ENCODE measurements at regions of chr5 and their contacts with region 1.

Region 1: DNA sequence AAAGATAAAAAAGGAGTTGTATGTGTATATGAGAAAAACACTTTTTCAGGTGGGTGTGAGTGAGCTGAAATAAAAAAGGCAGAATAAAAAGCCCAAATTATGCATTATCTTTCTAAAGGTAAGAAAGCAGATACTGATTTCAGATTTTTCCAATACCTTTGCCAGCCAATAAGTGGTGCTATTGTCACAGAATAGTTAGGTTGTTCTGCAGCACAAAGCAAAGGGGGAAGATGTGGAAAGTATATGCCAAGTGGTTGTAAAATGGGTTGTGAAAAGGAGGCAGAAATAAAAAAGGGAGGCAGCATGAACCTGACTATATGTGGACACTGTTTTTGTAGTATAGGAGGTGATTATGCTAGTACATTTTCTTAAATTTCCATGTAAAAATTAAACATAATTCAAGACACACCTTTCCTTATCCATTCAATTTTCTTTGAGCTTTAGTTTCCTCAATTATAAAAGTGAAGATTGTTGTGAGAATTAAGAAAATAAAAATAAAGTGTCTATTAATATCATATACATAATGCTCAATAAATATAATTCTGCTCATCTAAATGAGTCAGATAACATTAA is 106.7 kb downstream of the SMIM15 start:
- DNase-seq: peak; percentile 23
- H3K4me3 Mint-ChIP-seq: no peak overlapping the region
- H3K27ac Mint-ChIP-seq: no peak overlapping the region
- H3K4me1 Mint-ChIP-seq: peaks cover 26% of the 10 kb centered on the region
- H3K27me3 Mint-ChIP-seq: no peaks in the 10 kb centered on the region
- CTCF ChIP-seq: peak; percentile 57

Region 2: DNA sequence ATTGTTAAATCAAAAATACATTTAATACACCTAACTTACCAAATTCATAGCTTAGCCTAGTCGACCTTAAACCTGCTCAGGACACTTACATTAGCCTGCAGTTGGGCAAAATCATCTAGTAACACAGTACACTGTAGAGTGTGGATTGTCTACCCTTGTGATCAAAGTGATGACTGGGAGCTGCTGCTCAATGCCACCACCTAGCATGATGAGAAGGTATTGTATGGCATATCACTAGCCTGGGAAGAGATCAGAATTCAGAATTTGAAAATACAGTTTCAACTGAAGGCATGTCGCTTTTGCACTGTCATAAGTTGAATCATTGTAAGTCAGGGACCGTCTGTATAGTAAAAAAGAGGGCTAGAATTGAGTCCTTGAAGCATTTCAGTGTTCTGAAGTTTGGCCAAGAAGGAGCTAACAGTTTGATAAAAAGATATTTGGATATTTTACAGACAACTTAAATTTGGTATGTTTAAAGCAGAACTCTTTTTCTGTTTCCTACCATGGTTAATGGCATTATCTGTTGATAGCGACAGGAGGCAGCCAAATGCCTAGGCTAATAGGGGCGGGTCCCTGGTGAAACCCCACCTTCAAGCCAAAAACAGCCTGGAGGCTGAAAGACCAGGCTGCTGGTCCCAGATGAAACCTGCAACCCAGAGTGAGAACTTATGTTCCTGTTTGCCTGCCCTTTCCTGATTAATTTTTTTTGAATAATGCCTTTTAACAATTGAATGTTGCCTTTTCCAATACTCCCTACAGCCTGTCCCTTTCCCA is 83.8 kb after region 1 on chr5:
- CTCF ChIA-PET with region 1: no interaction called
- intact Hi-C with region 1: loop called (anchors 5 kb)
- DNase-seq: no peak
- H3K4me3 Mint-ChIP-seq: no peak overlapping the region
- H3K27ac Mint-ChIP-seq: no peak overlapping the region
- H3K4me1 Mint-ChIP-seq: peaks cover 14% of the 10 kb centered on the region
- H3K27me3 Mint-ChIP-seq: no peaks in the 10 kb centered on the region
- CTCF ChIP-seq: no peak

Region 3: GRCh38 chr5:61256474-61256873 is 201.0 kb after region 1 on chr5:
- CTCF ChIA-PET with region 1: no interaction called
- intact Hi-C with region 1: loop called (anchors 10 kb)
- DNase-seq: peak; percentile 42
- H3K4me3 Mint-ChIP-seq: no peak overlapping the region
- H3K27ac Mint-ChIP-seq: peak overlapping the region; percentile 55
- H3K4me1 Mint-ChIP-seq: peaks cover 53% of the 10 kb centered on the region
- H3K27me3 Mint-ChIP-seq: no peaks in the 10 kb centered on the region
- CTCF ChIP-seq: no peak

Region 4: GRCh38 chr5:61408476-61409168 is 353.1 kb after region 1 on chr5:
- CTCF ChIA-PET with region 1: no interaction called
- intact Hi-C with region 1: loop called (anchors 10 kb)
- DNase-seq: peak; percentile 99
- H3K4me3 Mint-ChIP-seq: peak overlapping the region; percentile 64
- H3K27ac Mint-ChIP-seq: peak overlapping the region; percentile 65
- H3K4me1 Mint-ChIP-seq: peaks cover 23% of the 10 kb centered on the region
- H3K27me3 Mint-ChIP-seq: no peaks in the 10 kb centered on the region
- CTCF ChIP-seq: no peak

Region 5: DNA sequence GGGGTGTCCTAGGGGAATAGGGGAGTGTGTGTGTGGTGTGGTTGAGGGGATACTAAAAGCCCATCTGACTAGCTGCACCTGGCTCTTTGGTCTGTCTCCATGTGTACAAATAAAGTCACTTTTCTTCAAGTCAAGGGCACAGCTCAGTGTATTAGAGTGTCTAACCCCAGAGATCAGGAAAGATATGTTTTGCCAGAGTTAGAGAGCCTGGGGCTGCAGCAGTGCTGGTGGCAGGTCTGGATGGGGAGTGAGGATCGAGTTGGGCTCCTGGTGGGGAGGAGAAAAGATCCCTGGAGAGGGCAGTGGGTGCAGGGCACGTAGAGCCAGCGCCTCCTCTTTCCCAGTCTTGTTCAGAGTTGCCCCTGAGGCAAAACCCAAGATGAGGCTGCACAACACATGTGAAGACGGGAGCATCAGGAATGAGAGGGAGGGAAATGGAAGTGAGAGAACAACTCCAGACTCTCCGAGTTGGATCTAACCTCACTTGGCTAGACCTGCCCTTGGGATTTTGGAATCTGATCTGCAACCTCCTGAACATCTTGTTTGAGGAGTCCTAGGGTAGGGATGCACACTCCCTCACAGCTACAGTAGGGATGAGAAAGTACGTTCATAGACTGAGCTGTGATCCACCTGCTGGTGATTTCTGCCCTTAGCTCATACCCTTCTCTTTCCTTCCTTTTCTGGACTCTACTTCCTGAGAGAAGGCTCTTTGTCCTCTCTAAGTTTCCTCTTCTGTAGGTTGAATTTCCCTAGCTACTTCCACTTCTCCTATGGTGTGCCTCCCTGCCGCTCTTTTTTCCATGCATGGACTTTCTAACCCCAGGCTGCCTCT is 586.4 kb after region 1 on chr5:
- CTCF ChIA-PET with region 1: interaction called, 3 read pairs
- intact Hi-C with region 1: loop called (anchors 5 kb)
- DNase-seq: no peak
- H3K4me3 Mint-ChIP-seq: no peak overlapping the region
- H3K27ac Mint-ChIP-seq: no peak overlapping the region
- H3K4me1 Mint-ChIP-seq: no peaks in the 10 kb centered on the region
- H3K27me3 Mint-ChIP-seq: peaks cover 3% of the 10 kb centered on the region
- CTCF ChIP-seq: peak; percentile 14

Region 6: DNA sequence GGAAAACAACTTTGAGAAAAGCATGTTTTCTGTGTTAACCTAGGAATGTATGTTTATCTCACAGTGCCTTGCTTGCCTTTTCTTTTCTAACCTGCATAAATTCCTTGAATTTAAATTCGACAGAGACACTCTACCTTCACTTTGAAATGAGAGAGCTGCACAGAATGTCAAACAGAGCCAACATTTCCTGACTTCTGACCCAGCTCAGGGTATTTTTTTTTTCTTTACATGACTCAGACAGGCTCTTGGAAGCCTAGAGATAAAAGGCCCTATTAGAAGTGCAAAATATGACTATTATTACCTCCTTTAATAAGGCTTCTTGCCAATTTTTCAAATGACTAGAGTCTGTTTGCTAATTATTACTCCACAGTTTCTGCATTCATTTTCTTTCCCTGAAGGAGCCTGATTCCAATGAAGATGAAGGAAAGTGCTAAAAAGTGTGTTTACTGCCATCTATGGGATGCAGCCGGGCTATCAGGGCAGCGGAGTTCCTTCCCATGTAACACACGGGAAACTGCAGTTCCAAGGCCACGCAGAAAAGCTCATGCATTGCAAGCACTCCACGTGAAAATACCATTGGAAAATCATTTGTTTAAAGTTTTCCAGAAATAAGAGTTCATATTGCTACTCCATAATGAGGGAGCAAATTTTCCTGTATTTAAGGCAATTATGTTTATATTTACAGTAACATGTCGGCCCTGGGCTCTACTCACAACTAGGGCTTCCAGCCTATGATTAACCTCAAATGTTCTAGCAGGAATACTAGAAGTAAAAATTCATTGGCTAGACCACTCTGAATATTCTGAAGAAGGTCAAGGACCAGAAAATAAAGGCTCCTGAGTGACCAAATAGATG is 762.2 kb after region 1 on chr5:
- CTCF ChIA-PET with region 1: no interaction called
- intact Hi-C with region 1: loop called (anchors 5 kb)
- DNase-seq: peak; percentile 56
- H3K4me3 Mint-ChIP-seq: no peak overlapping the region
- H3K27ac Mint-ChIP-seq: no peak overlapping the region
- H3K4me1 Mint-ChIP-seq: peaks cover 11% of the 10 kb centered on the region
- H3K27me3 Mint-ChIP-seq: peaks cover 34% of the 10 kb centered on the region
- CTCF ChIP-seq: peak; percentile 39

Measured in Calu3 (cell line).